IMR-90 (cell line): ENCODE measurements at regions of chrX and their contacts with region 1.

Region 1: DNA sequence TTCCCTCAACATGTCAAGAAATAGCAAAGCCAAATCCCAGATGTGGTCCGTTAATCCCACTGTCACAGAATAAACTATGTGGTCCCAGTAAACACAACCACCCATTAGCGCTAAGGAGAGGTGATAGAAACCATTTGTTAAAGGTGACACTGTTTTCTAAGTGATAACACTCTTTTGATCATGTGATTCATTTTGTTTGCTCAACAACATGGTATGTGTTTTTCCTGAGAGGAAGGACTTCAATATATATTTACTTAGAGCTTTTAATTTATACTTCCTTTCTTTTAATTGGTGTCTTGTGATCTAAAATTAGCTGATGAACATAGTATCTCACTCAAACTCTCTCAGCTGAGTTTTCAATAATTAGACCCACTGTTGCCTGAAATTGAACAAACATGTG is 55.0 kb downstream of the MID1 start:
- DNase-seq: no peak
- ATAC-seq: no peak
- H3K4me3 ChIP-seq: no peak overlapping the region
- H3K27ac ChIP-seq: no peak overlapping the region
- H3K4me1 ChIP-seq: peaks cover 15% of the 10 kb centered on the region
- H3K27me3 ChIP-seq: no peaks in the 10 kb centered on the region
- CTCF ChIP-seq: no peak
- POLR2A ChIP-seq: no peak
- RAD21 ChIP-seq: no peak

Region 2: GRCh38 chrX:9464435-9465371 is 1100.7 kb before region 1 on chrX and contains the start of gene TBL1X:
- CTCF ChIA-PET with region 1: no interaction called
- POLR2A ChIA-PET with region 1: no interaction called
- dilution Hi-C with region 1: no loop called
- in situ Hi-C with region 1: no loop called
- intact Hi-C with region 1: no loop called
- DNase-seq: peak; percentile 19
- ATAC-seq: peak; percentile 69
- H3K4me3 ChIP-seq: peak within 1 kb of the TSS; percentile 60
- H3K27ac ChIP-seq: peak within 1 kb of the TSS; percentile 86
- H3K4me1 ChIP-seq: peaks cover 3% of the 10 kb centered on the region; the same call in 1 of the 2 replicates
- H3K27me3 ChIP-seq: no peaks in the 10 kb centered on the region
- CTCF ChIP-seq: no peak
- POLR2A ChIP-seq: no peak
- RAD21 ChIP-seq: no peak
- total RNA-seq, gene TBL1X: 20.8 and 21.1 TPM in 2 replicates

Region 3: GRCh38 chrX:10526451-10526850 is 38.9 kb before region 1 on chrX:
- CTCF ChIA-PET with region 1: interaction called, 10 read pairs
- POLR2A ChIA-PET with region 1: no interaction called
- dilution Hi-C with region 1: no loop called
- in situ Hi-C with region 1: no loop called
- intact Hi-C with region 1: no loop called
- DNase-seq: peak; percentile 63
- ATAC-seq: peak; percentile 59
- H3K4me3 ChIP-seq: no peak overlapping the region
- H3K27ac ChIP-seq: no peak overlapping the region
- H3K4me1 ChIP-seq: peaks cover 7% of the 10 kb centered on the region
- H3K27me3 ChIP-seq: no peaks in the 10 kb centered on the region
- CTCF ChIP-seq: no peak
- POLR2A ChIP-seq: no peak
- RAD21 ChIP-seq: no peak